HEK293T (cell line): ENCODE measurements at regions of chr17 and their contacts with region 1.

Region 1: DNA sequence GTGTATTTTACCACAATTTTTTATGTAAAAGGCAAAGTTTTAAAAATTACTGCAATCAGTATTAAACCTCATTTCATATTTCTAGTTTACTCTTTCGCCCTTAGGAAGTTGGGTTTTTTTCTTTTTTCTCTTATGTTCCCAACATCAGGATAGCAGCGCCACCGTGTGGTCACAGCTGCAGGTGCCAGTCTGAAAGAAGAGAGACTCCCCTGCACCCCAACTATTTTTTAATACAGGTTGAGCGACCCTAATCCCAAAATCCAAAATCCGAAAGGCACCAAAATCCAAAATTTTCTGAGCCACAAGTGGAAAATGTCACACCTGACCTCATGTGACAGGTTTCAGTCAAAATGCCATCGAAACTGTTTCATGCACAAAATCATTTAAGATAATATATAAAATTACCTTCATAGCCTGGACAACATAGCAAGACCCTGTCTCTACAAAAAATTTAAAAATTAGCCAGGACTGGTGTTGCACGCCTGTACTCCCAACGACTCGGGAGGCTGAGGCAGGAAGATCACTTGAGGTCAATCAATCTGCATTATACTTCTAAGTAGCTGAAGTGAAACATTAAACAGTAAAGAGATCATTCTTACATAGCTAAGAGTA is 21.8 kb upstream of the ASGR2 start:
- DNase-seq: peak; percentile 59

Region 2: GRCh38 chr17:7056386-7056785 is 80.0 kb before region 1 on chr17:
- CTCF ChIA-PET with region 1: interaction called, 12 read pairs
- POLR2A ChIA-PET with region 1: interaction called, 3 read pairs
- DNase-seq: no peak

Region 3: GRCh38 chr17:7101531-7101930 is 34.8 kb before region 1 on chr17:
- CTCF ChIA-PET with region 1: interaction called, 10 read pairs
- POLR2A ChIA-PET with region 1: no interaction called
- DNase-seq: peak; percentile 3